ENCODE measurements at regions of chr9 and their contacts with region 1.

Region 1: DNA sequence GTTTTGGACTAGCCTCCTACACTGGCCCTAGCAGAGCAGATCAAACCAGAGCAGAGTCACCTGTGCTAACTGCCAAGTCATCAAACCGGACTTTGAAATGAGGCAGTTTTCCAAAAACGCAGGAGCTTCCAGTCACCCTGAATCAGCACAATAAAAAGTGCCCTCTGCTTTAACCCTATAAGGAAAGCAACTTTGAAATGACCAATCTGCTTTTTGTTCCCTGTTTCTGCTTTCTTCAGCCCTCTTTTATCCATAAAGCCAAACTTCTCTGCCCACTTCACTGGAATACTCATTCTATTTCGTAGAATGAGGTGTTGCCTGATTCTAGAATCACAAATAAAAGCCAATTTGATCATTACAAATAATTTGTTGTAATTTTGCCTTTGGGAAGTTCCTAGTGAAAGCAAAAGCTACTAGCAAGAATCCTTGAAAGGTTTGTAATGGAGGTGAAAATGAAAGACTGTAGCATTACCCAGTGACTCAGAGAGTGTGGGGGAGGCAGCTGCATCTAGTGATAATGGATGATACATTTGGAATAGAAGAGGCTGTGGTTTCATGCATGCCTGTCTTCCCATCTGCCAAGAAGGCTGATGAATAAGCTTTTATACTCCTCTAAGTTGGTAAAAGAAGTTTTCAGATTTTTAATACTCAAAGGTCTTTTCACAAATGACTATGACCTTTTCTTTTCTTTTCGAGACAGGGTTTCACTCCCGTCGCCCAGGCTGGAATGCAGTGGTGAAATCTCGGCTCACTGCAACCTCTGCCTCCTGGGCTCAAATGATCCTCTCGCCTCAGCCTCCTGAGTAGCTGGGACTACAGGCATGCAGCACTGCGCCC is 14.9 kb downstream of the SPAAR start:
- DNase-seq: no peak
- ATAC-seq: no peak
- H3K4me3 ChIP-seq: no peak overlapping the region
- H3K4me3 Mint-ChIP-seq: no peak overlapping the region
- H3K27ac ChIP-seq: no peak overlapping the region
- H3K27ac Mint-ChIP-seq: peak overlapping the region in 1 of 9 donors; percentile 19
- H3K4me1 ChIP-seq: no peaks in the 10 kb centered on the region
- H3K4me1 Mint-ChIP-seq: peaks cover 1 to 27% (median 14%) of the 10 kb centered on the region in 7 donors
- H3K27me3 ChIP-seq: no peaks in the 10 kb centered on the region
- H3K27me3 Mint-ChIP-seq: peaks cover 0 to 20% (median 0%) of the 10 kb centered on the region in 5 donors

Region 2: GRCh38 chr9:35829084-35829763 is 94.9 kb before region 1 on chr9 and contains the start of gene TMEM8B:
- CTCF ChIA-PET with region 1: no interaction called
- POLR2A ChIA-PET with region 1: no interaction called
- intact Hi-C with region 1: no loop called
- DNase-seq: peak; percentile 80 to 95 (median 88)
- ATAC-seq: peak; percentile 95
- H3K4me3 ChIP-seq: peak within 1 kb of the TSS; percentile 88
- H3K4me3 Mint-ChIP-seq: peak within 1 kb of the TSS; percentile 84 to 100 (median 94)
- H3K27ac ChIP-seq: peak within 1 kb of the TSS; percentile 94
- H3K27ac Mint-ChIP-seq: peak within 1 kb of the TSS; percentile 91 to 99 (median 94)
- H3K4me1 ChIP-seq: peaks cover 4 to 14% of the 10 kb centered on the region in 2 donors
- H3K4me1 Mint-ChIP-seq: peaks cover 25 to 48% (median 43%) of the 10 kb centered on the region in 7 donors
- H3K27me3 ChIP-seq: no peaks in the 10 kb centered on the region
- H3K27me3 Mint-ChIP-seq: peaks cover 0 to 5% (median 0%) of the 10 kb centered on the region in 5 donors
- total RNA-seq, gene TMEM8B: 3.9 to 11.6 (median 10.6) TPM

Region 3: DNA sequence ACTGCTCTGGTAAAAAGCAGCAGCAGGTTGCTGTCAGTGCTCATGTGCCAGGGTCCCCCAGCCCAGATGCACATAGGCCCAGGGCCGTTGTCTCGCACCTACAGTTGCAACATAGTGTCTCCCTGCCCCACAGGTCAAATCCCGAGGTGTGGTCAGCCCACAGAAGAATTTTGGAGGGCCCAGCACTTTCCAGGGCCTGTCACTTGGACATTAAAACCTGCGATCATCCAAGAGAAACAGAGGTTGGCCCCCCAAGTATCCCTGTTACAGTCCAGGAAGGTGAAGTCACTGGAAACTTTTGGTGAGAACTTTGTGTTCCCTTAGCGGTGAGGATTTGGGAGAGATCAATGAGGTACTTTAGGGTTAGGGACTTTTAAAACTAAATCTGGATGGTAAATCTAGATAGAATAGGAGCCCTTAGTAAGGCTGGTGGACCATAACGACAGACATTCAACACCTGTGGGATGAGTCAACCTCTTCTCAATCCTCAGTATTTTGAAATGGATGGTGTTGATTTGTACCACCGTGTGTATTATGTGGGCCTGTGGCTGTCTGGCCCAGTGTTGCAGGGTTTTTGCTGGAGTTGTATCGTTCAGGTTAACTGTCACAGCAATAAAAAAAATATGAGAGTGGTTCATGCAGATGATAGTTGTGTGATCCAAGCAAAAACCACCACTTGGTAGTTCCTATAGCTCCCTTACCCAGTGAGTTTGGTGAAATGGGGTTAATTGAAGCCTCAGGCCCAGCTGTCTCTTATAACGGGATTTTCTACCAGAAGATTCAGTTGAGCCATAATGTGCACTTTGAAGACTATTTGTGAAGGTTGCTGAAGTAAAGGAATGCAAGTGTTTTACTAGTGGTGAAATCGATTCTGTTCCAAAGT is 14.6 kb after region 1 on chr9:
- CTCF ChIA-PET with region 1: interaction called, 15 read pairs
- POLR2A ChIA-PET with region 1: interaction called, 6 read pairs
- intact Hi-C with region 1: loop called in 1 of 2 experiments (anchors 2 kb)
- DNase-seq: no peak
- ATAC-seq: no peak
- H3K4me3 ChIP-seq: no peak overlapping the region
- H3K4me3 Mint-ChIP-seq: peak overlapping the region in 9 of 10 donors; percentile 26 to 82 (median 67)
- H3K27ac ChIP-seq: peak overlapping the region; percentile 38
- H3K27ac Mint-ChIP-seq: peak overlapping the region in 8 of 9 donors; percentile 24 to 96 (median 82)
- H3K4me1 ChIP-seq: peaks cover 13 to 65% of the 10 kb centered on the region in 2 donors
- H3K4me1 Mint-ChIP-seq: peaks cover 32 to 79% (median 75%) of the 10 kb centered on the region in 7 donors
- H3K27me3 ChIP-seq: no peaks in the 10 kb centered on the region
- H3K27me3 Mint-ChIP-seq: no peaks in the 10 kb centered on the region

Measured in naive thymus-derived CD4-positive, alpha-beta T cell (primary cell).